ENCODE measurements at regions of chr17 and their contacts with region 1.

Region 1: DNA sequence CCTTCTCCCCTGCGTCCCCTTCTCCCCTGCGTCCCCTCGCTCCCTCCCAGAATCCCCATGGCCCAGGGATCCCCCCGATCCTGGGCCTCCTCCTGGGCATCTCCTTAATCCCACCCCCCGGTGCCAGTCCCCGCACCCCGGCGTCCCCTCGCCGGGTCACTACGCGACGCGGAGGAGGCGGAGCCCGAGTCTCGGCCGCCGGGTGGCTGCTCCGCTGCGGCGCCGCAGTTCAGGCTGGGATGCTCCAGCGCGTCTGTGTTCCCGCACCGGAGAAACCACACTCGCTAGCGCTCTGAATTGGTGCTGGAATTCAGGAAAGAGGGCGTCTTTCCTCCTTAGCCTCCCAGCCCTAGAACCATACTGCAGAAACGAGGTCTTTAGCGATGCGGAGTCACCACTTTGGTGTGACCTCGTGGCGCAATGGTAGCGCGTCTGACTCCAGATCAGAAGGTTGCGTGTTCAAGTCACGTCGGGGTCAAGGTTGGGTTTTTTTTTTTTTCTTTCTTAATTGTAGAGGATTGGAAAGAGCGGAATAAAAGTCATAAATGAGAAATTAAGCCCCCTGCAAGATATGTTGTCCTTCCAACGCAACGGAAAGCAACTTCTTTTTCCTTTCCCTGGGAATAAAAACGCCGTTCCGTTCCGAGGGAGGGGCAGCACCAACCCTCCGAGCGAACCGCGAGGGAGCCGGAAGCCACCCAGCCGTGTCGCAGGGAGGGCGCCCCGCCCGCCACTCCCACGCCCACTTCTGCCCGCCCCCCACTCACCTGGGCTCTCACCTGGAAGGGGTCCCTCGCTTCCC is 25.7 kb upstream of the SLC47A1 start:
- DNase-seq: peak; percentile 82 to 96 (median 90)
- ATAC-seq: peak; percentile 85
- H3K4me3 ChIP-seq: peak overlapping the region; percentile 99
- H3K4me3 Mint-ChIP-seq: peak overlapping the region; percentile 87 to 99 (median 91)
- H3K27ac ChIP-seq: peak overlapping the region; percentile 67
- H3K27ac Mint-ChIP-seq: peak overlapping the region; percentile 95 to 99 (median 96)
- H3K4me1 ChIP-seq: peaks cover 0 to 6% of the 10 kb centered on the region in 2 donors
- H3K4me1 Mint-ChIP-seq: peaks cover 8 to 13% (median 11%) of the 10 kb centered on the region in 7 donors
- H3K27me3 ChIP-seq: no peaks in the 10 kb centered on the region
- H3K27me3 Mint-ChIP-seq: peaks cover 0 to 24% (median 0%) of the 10 kb centered on the region in 5 donors

Region 2: DNA sequence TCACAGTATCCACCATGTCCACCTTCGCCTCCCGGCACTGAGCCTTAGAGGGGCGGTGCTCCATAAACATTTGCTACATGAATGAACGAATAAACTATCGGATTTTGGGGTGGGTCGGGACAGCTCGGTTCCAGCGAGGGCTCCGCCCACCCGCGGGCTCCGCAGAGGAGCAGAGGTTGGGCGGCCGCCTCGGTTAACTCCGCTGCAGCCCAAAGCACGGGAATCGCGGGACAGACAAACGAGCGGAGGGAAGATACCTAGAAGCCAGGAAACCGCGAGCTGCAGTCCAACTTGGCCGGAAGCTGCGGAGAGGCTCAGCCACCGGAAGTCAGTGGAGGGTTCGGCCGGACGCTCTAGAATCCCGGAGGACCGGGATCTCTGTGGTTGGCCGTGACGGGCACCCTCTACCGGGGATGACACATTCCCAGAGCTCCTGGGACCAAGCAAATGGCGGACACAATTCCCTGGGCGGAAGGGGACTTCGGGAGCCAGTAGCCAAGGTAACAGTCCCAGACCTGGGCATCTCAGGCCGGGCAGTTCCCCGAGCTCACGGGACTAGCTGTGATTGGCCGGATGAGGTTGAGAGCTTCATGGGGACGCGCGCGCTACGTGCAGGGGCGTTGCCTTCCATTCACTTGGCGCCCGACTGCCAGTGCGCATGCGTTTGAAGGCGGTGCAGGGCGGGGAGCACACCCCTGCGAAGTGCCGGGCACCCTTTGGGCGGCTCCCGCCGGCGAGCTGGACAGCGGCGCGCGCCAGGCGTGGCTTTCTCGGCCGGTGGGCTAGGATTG is 130.2 kb before region 1 on chr17:
- CTCF ChIA-PET with region 1: interaction called, 4 read pairs
- POLR2A ChIA-PET with region 1: no interaction called
- intact Hi-C with region 1: loop called (anchors 1 kb)
- DNase-seq: peak; percentile 85 to 95 (median 92)
- ATAC-seq: peak; percentile 89
- H3K4me3 ChIP-seq: peak overlapping the region; percentile 99
- H3K4me3 Mint-ChIP-seq: peak overlapping the region; percentile 83 to 100 (median 97)
- H3K27ac ChIP-seq: peak overlapping the region; percentile 81
- H3K27ac Mint-ChIP-seq: peak overlapping the region; percentile 83 to 99 (median 97)
- H3K4me1 ChIP-seq: peaks cover 2 to 6% of the 10 kb centered on the region in 2 donors
- H3K4me1 Mint-ChIP-seq: peaks cover 6 to 29% (median 20%) of the 10 kb centered on the region in 7 donors
- H3K27me3 ChIP-seq: no peaks in the 10 kb centered on the region
- H3K27me3 Mint-ChIP-seq: no peaks in the 10 kb centered on the region

Region 3: GRCh38 chr17:19410875-19411620 is 96.9 kb before region 1 on chr17 and contains the start of gene RNF112:
- CTCF ChIA-PET with region 1: no interaction called
- POLR2A ChIA-PET with region 1: no interaction called
- intact Hi-C with region 1: no loop called
- DNase-seq: no peak
- ATAC-seq: no peak
- H3K4me3 ChIP-seq: no peak within 1 kb of the TSS
- H3K4me3 Mint-ChIP-seq: no peak within 1 kb of the TSS
- H3K27ac ChIP-seq: no peak within 1 kb of the TSS
- H3K27ac Mint-ChIP-seq: peak within 1 kb of the TSS in 1 of 9 donors; percentile 52
- H3K4me1 ChIP-seq: no peaks in the 10 kb centered on the region
- H3K4me1 Mint-ChIP-seq: no peaks in the 10 kb centered on the region
- H3K27me3 ChIP-seq: no peaks in the 10 kb centered on the region
- H3K27me3 Mint-ChIP-seq: peaks cover 0 to 9% (median 0%) of the 10 kb centered on the region in 5 donors
- total RNA-seq, gene RNF112: 0.54 to 2.3 (median 1.5) TPM

Measured in naive thymus-derived CD4-positive, alpha-beta T cell (primary cell).